Breast epithelium (tissue), 4 donors: ENCODE measurements at regions of chr1 and their contacts with region 1.

Region 1: GRCh38 chr1:174258148-174258550 is 98.8 kb downstream of the RABGAP1L start:
- DNase-seq: no peak
- H3K4me3 ChIP-seq: no peak overlapping the region
- H3K27ac ChIP-seq: no peak overlapping the region
- H3K4me1 ChIP-seq: no peaks in the 10 kb centered on the region
- H3K27me3 ChIP-seq: no peaks in the 10 kb centered on the region
- CTCF ChIP-seq: peak in 2 of 3 donors; percentile 46 to 48
- POLR2A ChIP-seq: no peak

Region 2: GRCh38 chr1:174324939-174325338 is 66.8 kb after region 1 on chr1:
- intact Hi-C with region 1: no loop called
- DNase-seq: no peak
- H3K4me3 ChIP-seq: no peak overlapping the region
- H3K27ac ChIP-seq: no peak overlapping the region
- H3K4me1 ChIP-seq: no peaks in the 10 kb centered on the region
- H3K27me3 ChIP-seq: no peaks in the 10 kb centered on the region
- CTCF ChIP-seq: no peak
- POLR2A ChIP-seq: no peak

Region 3: GRCh38 chr1:174736831-174737230 is 478.7 kb after region 1 on chr1:
- intact Hi-C with region 1: loop called (anchors 10 kb)
- DNase-seq: no peak
- H3K4me3 ChIP-seq: no peak overlapping the region
- H3K27ac ChIP-seq: no peak overlapping the region
- H3K4me1 ChIP-seq: no peaks in the 10 kb centered on the region
- H3K27me3 ChIP-seq: no peaks in the 10 kb centered on the region
- CTCF ChIP-seq: no peak
- POLR2A ChIP-seq: no peak